ENCODE measurements at regions of chr5 and their contacts with region 1.

Region 1: GRCh38 chr5:27778121-27778520 is 739.7 kb upstream of the CDH9 start:
- DNase-seq: no peak
- ATAC-seq: no peak
- H3K4me3 ChIP-seq: no peak overlapping the region
- H3K27ac ChIP-seq: no peak overlapping the region
- H3K4me1 ChIP-seq: no peaks in the 10 kb centered on the region
- H3K27me3 ChIP-seq: no peaks in the 10 kb centered on the region
- CTCF ChIP-seq: no peak

Region 2: GRCh38 chr5:27742805-27743204 is 35.3 kb before region 1 on chr5:
- CTCF ChIA-PET with region 1: interaction called, 11 read pairs
- POLR2A ChIA-PET with region 1: no interaction called
- in situ Hi-C with region 1: no loop called
- intact Hi-C with region 1: no loop called
- DNase-seq: no peak
- ATAC-seq: no peak
- H3K4me3 ChIP-seq: no peak overlapping the region
- H3K27ac ChIP-seq: no peak overlapping the region
- H3K4me1 ChIP-seq: no peaks in the 10 kb centered on the region
- H3K27me3 ChIP-seq: no peaks in the 10 kb centered on the region
- CTCF ChIP-seq: no peak